Caco-2 (cell line): ENCODE measurements at regions of chr6 and their contacts with region 1.

Region 1: GRCh38 chr6:42217519-42218367 is at the start of gene MRPS10:
- DNase-seq: peak; percentile 93 to 94
- H3K4me3 ChIP-seq: peak within 1 kb of the TSS; percentile 87
- H3K4me3 Mint-ChIP-seq: peak within 1 kb of the TSS; percentile 99
- H3K27ac Mint-ChIP-seq: peak within 1 kb of the TSS; percentile 99
- H3K4me1 ChIP-seq: peaks cover 7% of the 10 kb centered on the region
- H3K4me1 Mint-ChIP-seq: no peaks in the 10 kb centered on the region
- H3K27me3 ChIP-seq: no peaks in the 10 kb centered on the region
- H3K27me3 Mint-ChIP-seq: no peaks in the 10 kb centered on the region
- CTCF ChIP-seq: no peak
- total RNA-seq, gene MRPS10: 32.3 and 38.6 TPM in 2 replicates

Region 2: DNA sequence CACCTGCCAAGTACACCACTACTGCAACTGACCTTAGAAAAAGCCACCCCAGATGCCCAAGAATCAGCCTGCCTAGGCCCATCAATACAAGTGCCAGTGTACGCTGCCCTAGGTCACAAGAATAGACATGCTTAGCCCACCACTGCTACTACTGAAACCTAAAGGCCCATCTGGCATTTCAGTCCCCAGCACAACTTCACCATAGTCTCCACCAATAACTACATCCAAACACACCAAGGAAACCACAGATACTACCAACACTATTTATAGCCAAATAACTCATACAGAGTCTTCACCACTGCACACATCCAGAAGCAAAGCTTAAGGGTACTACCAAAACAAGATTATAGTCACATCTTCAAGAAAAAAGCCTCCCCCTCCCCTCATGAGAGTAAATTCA is 961.4 kb before region 1 on chr6:
- CTCF ChIA-PET with region 1: no interaction called
- POLR2A ChIA-PET with region 1: no interaction called
- intact Hi-C with region 1: no loop called
- DNase-seq: no peak
- H3K4me3 ChIP-seq: no peak overlapping the region
- H3K4me3 Mint-ChIP-seq: no peak overlapping the region
- H3K27ac Mint-ChIP-seq: no peak overlapping the region
- H3K4me1 ChIP-seq: no peaks in the 10 kb centered on the region
- H3K4me1 Mint-ChIP-seq: no peaks in the 10 kb centered on the region
- H3K27me3 ChIP-seq: peaks cover 1% of the 10 kb centered on the region; the same call in 1 of the 2 replicates
- H3K27me3 Mint-ChIP-seq: peaks cover 6% of the 10 kb centered on the region
- CTCF ChIP-seq: no peak

Region 3: DNA sequence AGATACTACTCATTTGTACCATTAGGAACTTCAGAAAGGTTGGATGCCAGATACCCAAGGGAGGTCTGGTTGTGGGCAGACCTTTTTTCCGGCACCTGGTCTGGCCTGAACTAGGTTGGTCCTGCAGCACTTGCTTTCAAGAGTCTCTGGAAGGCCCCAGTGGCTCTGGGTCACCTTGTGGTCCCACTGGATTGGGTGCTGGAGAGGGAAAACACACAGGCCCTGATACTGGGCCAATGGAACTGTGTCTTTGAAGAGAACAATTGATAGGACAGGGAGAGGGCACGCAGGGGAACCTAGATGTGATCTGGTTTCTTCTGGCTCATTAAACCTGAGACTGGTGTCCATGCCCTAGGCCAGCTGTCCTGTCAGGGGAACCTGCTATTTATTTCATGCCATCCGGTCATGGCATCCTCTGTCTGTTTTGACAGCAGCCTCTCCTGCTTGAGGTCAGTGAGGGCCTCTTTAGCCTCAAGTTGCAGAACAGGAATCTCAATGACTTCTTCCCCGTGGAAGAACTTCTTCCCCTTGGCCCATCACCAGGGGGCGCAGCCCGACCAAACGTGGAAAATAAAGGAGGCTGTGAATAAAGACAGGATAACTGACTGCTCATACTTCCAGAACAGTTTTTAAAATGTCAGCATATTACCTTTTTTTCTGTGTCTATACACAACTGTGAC is 142.4 kb before region 1 on chr6:
- CTCF ChIA-PET with region 1: no interaction called
- POLR2A ChIA-PET with region 1: no interaction called
- intact Hi-C with region 1: loop called (anchors 1 kb)
- DNase-seq: peak; percentile 78 to 87
- H3K4me3 ChIP-seq: no peak overlapping the region
- H3K4me3 Mint-ChIP-seq: no peak overlapping the region
- H3K27ac Mint-ChIP-seq: no peak overlapping the region
- H3K4me1 ChIP-seq: no peaks in the 10 kb centered on the region
- H3K4me1 Mint-ChIP-seq: no peaks in the 10 kb centered on the region
- H3K27me3 ChIP-seq: no peaks in the 10 kb centered on the region
- H3K27me3 Mint-ChIP-seq: no peaks in the 10 kb centered on the region
- CTCF ChIP-seq: peak; percentile 83 to 89

Region 4: DNA sequence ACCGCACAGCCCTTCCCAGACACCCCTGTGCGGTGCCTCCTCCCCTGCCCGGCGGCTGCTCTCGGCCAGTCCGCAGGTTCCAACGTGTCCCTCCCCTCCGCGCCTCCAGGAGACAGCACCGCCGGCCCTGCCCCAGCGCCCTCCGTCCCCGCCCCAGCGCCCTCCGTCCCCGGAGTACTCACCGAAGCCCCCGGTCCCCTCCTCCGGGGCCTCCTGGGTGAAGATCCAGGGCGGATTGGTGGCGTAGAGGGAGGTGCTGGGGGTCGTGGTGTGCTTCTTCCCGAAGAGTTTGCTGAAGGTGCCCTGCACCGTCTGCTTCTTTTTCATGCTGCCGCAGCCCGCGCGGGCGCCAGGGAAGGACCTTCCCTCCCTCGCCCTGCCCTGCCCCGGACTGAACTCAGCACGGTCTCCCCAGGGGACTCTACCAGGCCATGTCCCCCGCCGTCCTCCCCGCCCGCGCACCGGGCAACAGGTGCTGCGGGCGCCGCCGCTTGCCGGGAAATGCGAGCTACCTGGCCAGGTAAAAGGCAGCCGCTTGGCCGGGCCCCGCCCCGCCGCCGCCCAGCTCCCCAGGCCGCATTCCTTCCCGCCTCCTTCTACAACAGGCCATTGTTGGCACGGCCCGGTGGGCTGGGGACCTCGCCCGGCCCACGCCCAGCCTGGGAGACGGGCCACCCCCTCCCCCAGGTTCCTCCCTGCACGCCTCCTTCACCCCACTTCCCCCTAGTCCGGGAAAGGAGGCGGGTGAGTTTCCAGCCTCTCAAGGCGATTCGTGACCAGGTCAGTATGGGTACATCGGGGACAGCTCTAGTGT is 75.4 kb before region 1 on chr6 and contains the start of gene C6orf132:
- CTCF ChIA-PET with region 1: interaction called, 11 read pairs
- POLR2A ChIA-PET with region 1: interaction called, 4 read pairs
- intact Hi-C with region 1: loop called (anchors 2 kb)
- DNase-seq: peak; percentile 90
- H3K4me3 ChIP-seq: peak within 1 kb of the TSS; percentile 82
- H3K4me3 Mint-ChIP-seq: peak within 1 kb of the TSS; percentile 78
- H3K27ac Mint-ChIP-seq: peak within 1 kb of the TSS; percentile 95
- H3K4me1 ChIP-seq: peaks cover 44% of the 10 kb centered on the region
- H3K4me1 Mint-ChIP-seq: peaks cover 34% of the 10 kb centered on the region
- H3K27me3 ChIP-seq: no peaks in the 10 kb centered on the region
- H3K27me3 Mint-ChIP-seq: no peaks in the 10 kb centered on the region
- CTCF ChIP-seq: peak in 1 of 2 experiments; percentile 13
- total RNA-seq, gene C6orf132: 56.2 and 61.2 TPM in 2 replicates